ENCODE measurements at regions of chrX and their contacts with region 1.

Region 1: DNA sequence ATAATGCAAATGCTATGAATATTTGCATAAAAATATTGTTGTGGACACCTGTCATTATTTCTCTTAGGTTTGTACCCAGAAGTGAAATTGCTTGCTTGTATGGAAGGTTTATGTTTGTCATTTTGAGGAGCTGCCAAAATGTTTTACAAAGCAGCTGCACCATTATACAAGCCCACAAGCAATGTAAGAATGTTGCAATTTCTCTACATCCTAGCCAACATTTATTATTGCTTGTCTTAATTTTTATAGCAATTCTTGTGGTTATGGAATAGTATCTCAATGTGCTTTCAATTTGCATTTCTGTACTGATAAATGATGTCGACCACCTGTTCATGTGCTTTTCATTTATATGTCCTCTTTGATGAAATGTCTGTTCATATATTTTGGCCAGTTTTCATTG is 18.7 kb upstream of the RBMX start:
- DNase-seq: no peak
- ATAC-seq: no peak
- H3K4me3 ChIP-seq: no peak overlapping the region
- H3K4me3 Mint-ChIP-seq: no peak overlapping the region
- H3K27ac ChIP-seq: no peak overlapping the region
- H3K27ac Mint-ChIP-seq: no peak overlapping the region
- H3K4me1 ChIP-seq: no peaks in the 10 kb centered on the region
- H3K4me1 Mint-ChIP-seq: peaks cover 0 to 5% (median 0%) of the 10 kb centered on the region in 3 donors
- H3K27me3 ChIP-seq: no peaks in the 10 kb centered on the region
- H3K27me3 Mint-ChIP-seq: peaks cover 0 to 6% of the 10 kb centered on the region in 2 donors

Region 2: DNA sequence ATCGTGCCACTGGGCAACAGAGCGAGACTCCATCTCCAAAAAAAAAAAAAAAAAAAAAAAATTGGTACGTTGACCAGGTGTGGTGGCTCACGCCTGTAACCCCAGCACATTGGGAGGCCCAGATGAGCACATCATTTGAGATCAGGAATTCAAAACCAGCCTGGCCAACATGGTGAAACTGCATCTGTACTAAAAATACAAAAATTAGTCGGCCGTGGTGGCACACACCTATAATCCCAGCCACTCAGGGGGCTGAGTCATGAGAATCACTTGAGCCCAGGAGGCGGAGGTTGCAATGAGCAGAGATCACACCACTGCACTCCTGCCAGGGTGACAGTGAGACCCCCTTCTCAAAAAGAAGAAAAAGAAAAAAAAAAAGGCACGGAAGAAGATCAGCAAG is 43.2 kb before region 1 on chrX:
- CTCF ChIA-PET with region 1: no interaction called
- POLR2A ChIA-PET with region 1: interaction called in 1 of 2 experiments, 10 read pairs
- DNase-seq: no peak
- ATAC-seq: no peak
- H3K4me3 ChIP-seq: no peak overlapping the region
- H3K4me3 Mint-ChIP-seq: no peak overlapping the region
- H3K27ac ChIP-seq: no peak overlapping the region
- H3K27ac Mint-ChIP-seq: no peak overlapping the region
- H3K4me1 ChIP-seq: no peaks in the 10 kb centered on the region
- H3K4me1 Mint-ChIP-seq: peaks cover 0 to 19% (median 5%) of the 10 kb centered on the region in 3 donors
- H3K27me3 ChIP-seq: no peaks in the 10 kb centered on the region
- H3K27me3 Mint-ChIP-seq: peaks cover 0 to 9% of the 10 kb centered on the region in 2 donors

Region 3: DNA sequence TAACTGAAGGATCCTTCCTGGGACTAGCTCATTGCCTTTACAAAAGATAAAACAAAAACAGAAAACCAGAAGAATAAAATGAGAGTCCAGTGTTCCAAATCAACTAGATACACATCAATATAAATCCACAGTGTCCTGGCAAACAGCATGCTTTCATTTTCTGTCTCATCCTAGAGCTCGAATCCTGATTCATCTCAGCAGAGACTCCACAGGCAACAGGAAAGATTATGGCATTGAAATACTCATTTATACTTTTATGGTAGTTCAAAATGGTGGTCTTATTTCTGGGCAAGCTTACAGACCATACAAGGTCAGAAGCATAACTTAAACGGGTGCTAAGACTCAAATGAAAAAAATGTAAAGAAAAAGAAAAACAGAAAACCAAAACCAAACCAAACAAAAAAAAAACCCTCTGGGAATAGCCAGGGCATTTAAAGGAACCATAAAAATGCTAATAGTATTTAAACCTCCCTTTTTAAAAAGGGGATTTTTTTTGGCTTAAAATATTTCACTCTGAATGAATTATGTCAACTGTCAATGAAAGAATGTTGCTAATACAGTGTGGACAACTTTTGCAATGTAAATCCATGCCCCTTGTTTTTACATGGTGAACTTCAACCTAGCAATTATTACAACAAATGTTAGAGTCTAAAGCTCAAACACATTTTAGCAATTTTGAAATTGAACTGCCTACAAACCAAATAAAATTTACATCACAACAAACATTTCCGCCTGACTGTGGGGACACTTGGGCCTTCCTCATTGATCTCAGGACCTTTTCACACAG is 76.7 kb after region 1 on chrX:
- CTCF ChIA-PET with region 1: no interaction called
- POLR2A ChIA-PET with region 1: no interaction called
- DNase-seq: no peak
- ATAC-seq: no peak
- H3K4me3 ChIP-seq: no peak overlapping the region
- H3K4me3 Mint-ChIP-seq: no peak overlapping the region
- H3K27ac ChIP-seq: no peak overlapping the region
- H3K27ac Mint-ChIP-seq: no peak overlapping the region
- H3K4me1 ChIP-seq: no peaks in the 10 kb centered on the region
- H3K4me1 Mint-ChIP-seq: no peaks in the 10 kb centered on the region
- H3K27me3 ChIP-seq: no peaks in the 10 kb centered on the region
- H3K27me3 Mint-ChIP-seq: peaks cover 0 to 7% of the 10 kb centered on the region in 2 donors

Region 4: DNA sequence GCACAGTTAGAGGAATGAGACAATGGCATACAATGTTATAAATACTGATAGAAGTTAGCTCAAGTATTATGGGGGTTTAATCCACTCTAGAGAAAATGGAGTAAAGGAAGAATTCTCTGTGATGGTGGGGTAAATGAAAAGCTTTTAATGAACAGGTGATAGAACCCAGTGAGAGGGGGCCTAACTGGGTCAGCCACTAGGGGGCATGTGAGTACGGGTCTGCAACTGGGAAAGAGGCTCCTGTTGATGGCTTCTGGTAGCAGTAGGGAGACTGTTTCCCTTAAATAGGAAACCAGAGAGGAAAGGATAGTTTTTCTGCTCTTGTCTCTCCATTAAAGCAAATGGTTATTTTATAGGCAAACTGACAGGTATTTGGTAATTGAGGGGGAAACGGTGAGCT is 267.4 kb after region 1 on chrX:
- CTCF ChIA-PET with region 1: no interaction called
- POLR2A ChIA-PET with region 1: no interaction called
- DNase-seq: peak in 2 of 35 experiments; percentile 1
- ATAC-seq: no peak
- H3K4me3 ChIP-seq: no peak overlapping the region
- H3K4me3 Mint-ChIP-seq: no peak overlapping the region
- H3K27ac ChIP-seq: no peak overlapping the region
- H3K27ac Mint-ChIP-seq: no peak overlapping the region
- H3K4me1 ChIP-seq: no peaks in the 10 kb centered on the region
- H3K4me1 Mint-ChIP-seq: no peaks in the 10 kb centered on the region
- H3K27me3 ChIP-seq: peaks cover 0 to 3% of the 10 kb centered on the region in 2 experiments
- H3K27me3 Mint-ChIP-seq: peaks cover 0 to 33% of the 10 kb centered on the region in 2 donors

Measured in T-cell (primary cell).